ENCODE measurements at regions of chr17 and their contacts with region 1.

Region 1: GRCh38 chr17:73231841-73232586 is 29.7 kb downstream of the CPSF4L start:
- DNase-seq: peak; percentile 95 to 97
- H3K4me3 ChIP-seq: peak overlapping the region; percentile 87 to 100
- H3K27ac ChIP-seq: peak overlapping the region; percentile 82 to 93
- H3K4me1 ChIP-seq: peaks cover 0 to 58% (median 27%) of the 10 kb centered on the region in 4 donors
- H3K27me3 ChIP-seq: no peaks in the 10 kb centered on the region
- CTCF ChIP-seq: peak; percentile 38 to 39

Region 2: DNA sequence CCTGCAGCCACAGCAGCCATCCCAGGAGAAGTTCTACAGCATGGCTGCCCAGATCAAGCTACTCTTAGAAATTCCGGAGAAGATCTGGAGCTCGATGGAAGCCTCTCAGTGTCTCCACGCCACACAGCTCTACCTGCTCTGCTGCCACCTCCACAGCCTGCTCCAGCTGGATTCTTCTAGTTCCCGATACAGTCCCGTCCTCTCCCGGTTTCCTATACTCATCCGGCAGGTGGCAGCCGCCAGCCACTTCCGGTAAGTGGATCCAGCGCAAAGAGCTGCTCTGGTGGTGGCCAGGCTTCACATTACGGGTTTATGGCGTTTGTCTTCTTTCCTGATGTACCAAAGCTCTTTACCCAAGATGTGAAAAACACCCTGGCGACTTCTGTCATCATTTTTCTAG is 35.5 kb before region 1 on chr17:
- intact Hi-C with region 1: loop called (anchors 5 kb)
- DNase-seq: peak in 1 of 2 donors; percentile 65
- H3K4me3 ChIP-seq: no peak overlapping the region
- H3K27ac ChIP-seq: no peak overlapping the region
- H3K4me1 ChIP-seq: peaks cover 0 to 20% (median 13%) of the 10 kb centered on the region in 4 donors
- H3K27me3 ChIP-seq: no peaks in the 10 kb centered on the region
- CTCF ChIP-seq: no peak

Region 3: GRCh38 chr17:73311781-73312641 is 80.0 kb after region 1 on chr17 and contains the start of gene CDC42EP4:
- intact Hi-C with region 1: loop called (anchors 2 kb)
- DNase-seq: peak; percentile 95 to 98
- H3K4me3 ChIP-seq: peak within 1 kb of the TSS; percentile 76 to 94
- H3K27ac ChIP-seq: peak within 1 kb of the TSS; percentile 97 to 98
- H3K4me1 ChIP-seq: peaks cover 0 to 43% (median 36%) of the 10 kb centered on the region in 4 donors
- H3K27me3 ChIP-seq: no peaks in the 10 kb centered on the region
- CTCF ChIP-seq: no peak

Region 4: DNA sequence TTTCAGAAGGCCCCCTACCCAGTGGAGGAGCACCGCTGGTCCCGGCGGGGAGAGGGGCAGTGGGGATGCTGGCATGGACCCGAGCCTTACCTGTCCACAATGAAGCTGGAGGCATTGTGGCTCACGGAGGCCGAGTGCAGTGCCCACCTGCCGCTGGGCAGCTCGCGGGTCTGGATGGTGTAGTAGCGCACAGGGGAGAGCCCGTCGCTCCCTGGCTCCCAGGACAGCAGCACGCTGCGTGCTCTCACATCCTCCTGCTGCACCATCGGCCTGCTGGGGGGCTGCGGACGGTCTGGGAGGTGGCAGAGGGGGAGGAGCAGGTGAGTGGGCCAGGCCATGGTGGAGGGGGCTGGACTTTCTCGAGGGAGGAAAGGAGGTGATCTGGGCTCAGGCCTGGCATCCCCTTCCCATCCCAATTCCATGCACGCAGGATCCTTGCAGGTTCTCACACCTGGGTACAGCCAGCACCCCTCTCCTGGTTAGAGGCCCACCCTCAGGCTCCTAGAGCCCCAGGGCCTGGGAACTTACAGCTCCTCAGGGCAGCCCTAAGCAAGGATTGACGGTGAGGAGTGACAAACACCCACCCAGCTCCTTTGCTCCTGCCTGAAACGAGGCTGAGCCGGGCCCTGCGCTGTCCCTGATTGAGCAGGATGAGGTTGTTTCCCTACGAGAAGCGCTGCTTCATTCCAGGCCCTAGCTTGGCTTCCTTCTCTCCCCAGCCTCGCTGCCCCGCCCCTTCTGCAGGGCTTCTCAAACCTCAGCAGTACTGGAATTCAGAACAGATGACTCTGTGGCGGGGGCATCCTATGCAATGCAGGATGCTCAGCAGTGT is 155.9 kb after region 1 on chr17:
- intact Hi-C with region 1: no loop called
- DNase-seq: no peak
- H3K4me3 ChIP-seq: no peak overlapping the region
- H3K27ac ChIP-seq: no peak overlapping the region
- H3K4me1 ChIP-seq: no peaks in the 10 kb centered on the region
- H3K27me3 ChIP-seq: peaks cover 0 to 4% of the 10 kb centered on the region in 2 donors
- CTCF ChIP-seq: no peak